ENCODE measurements at regions of chr16 and their contacts with region 1.

Region 1: DNA sequence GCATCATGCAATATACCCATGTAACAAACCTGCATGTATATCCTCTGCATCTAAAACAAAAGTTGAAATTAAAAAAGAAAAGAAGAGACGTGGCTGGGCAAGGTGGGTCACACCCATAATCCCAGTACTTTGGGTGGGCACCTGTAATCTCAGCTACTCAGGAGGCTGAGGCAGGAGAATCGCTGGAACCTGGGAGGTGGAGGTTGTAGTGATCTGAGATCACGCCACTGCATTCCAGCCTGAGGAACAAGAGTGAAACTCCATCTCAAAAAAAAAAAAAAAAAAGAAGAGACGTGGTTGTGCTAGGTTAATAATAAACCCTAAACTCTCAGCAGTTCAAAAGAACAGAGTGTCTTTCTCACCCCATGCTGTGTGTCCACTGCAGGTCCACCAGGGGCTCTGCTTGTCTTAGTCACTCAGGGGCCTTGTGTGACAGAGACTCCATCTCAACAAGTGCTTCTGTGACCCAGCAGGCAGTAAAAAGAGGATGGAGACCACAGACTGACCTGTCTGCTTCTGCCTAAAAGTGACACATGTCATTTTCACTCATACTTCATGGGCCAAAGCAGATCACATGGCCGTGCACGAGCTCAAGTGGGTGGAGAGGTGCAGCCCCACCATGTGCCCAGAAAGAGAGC is 22.3 kb upstream of the N4BP1 start:
- DNase-seq: no peak
- H3K4me3 ChIP-seq: no peak overlapping the region
- H3K27ac ChIP-seq: no peak overlapping the region
- H3K27me3 ChIP-seq: peaks cover 3% of the 10 kb centered on the region
- CTCF ChIP-seq: no peak

Region 2: GRCh38 chr16:48231727-48232492 is 400.3 kb before region 1 on chr16:
- CTCF ChIA-PET with region 1: interaction called, 80 read pairs
- POLR2A ChIA-PET with region 1: no interaction called
- DNase-seq: peak; percentile 2
- H3K4me3 ChIP-seq: no peak overlapping the region
- H3K27ac ChIP-seq: no peak overlapping the region
- H3K27me3 ChIP-seq: no peaks in the 10 kb centered on the region
- CTCF ChIP-seq: peak; percentile 74

Region 3: GRCh38 chr16:48353565-48354163 is 278.6 kb before region 1 on chr16:
- CTCF ChIA-PET with region 1: interaction called, 38 read pairs
- POLR2A ChIA-PET with region 1: no interaction called
- DNase-seq: peak; percentile 37
- H3K4me3 ChIP-seq: no peak overlapping the region
- H3K27ac ChIP-seq: no peak overlapping the region
- H3K27me3 ChIP-seq: no peaks in the 10 kb centered on the region
- CTCF ChIP-seq: peak; percentile 92

Region 4: DNA sequence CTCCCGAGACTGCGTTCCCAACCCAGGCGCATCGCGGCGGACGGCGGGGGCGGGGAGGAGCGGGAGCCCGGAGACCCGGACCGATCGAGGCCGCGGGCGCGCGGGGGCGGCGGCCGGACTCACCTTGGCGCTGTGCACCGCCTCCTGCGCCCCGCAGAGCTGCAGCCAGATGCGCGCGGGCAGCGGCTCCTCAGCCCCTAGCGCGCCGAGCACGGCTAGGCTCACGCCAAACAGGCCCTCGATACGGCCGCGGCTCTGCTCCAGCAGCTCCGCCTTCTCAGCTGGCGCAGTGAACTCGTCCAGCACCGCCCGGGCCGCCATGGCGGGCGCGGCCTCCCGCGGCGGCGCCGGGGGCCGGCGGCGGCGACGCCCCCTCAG is 22.6 kb before region 1 on chr16:
- CTCF ChIA-PET with region 1: interaction called, 20 read pairs
- POLR2A ChIA-PET with region 1: no interaction called
- DNase-seq: no peak
- H3K4me3 ChIP-seq: peak overlapping the region; percentile 99
- H3K27ac ChIP-seq: peak overlapping the region; percentile 52
- H3K27me3 ChIP-seq: no peaks in the 10 kb centered on the region
- CTCF ChIP-seq: no peak

Region 5: GRCh38 chr16:48659940-48660339 is 27.7 kb after region 1 on chr16:
- CTCF ChIA-PET with region 1: interaction called, 10 read pairs
- POLR2A ChIA-PET with region 1: no interaction called
- DNase-seq: no peak
- H3K4me3 ChIP-seq: no peak overlapping the region
- H3K27ac ChIP-seq: no peak overlapping the region
- H3K27me3 ChIP-seq: no peaks in the 10 kb centered on the region
- CTCF ChIP-seq: no peak

Measured in AG04450 (cell line).